HCT116 (cell line): ENCODE measurements at regions of chr6 and their contacts with region 1.

Region 1: GRCh38 chr6:31739639-31740396 is at the start of gene MSH5:
- DNase-seq: peak; percentile 99
- ATAC-seq: peak; percentile 86
- H3K4me3 ChIP-seq: peak within 1 kb of the TSS; percentile 86 to 92
- H3K27ac ChIP-seq: peak within 1 kb of the TSS; percentile 99
- H3K4me1 ChIP-seq: peaks cover 35 to 51% of the 10 kb centered on the region in 2 experiments
- H3K27me3 ChIP-seq: no peaks in the 10 kb centered on the region
- CTCF ChIP-seq: no peak
- POLR2A ChIP-seq: peak; percentile 39
- RAD21 ChIP-seq: no peak
- total RNA-seq, gene MSH5: 90.4 TPM

Region 2: GRCh38 chr6:31546962-31547726 is 192.7 kb before region 1 on chr6 and contains the start of gene NFKBIL1:
- CTCF ChIA-PET with region 1: no interaction called
- POLR2A ChIA-PET with region 1: no interaction called
- RAD21 ChIA-PET with region 1: no interaction called
- intact Hi-C with region 1: loop called (anchors 1 kb)
- DNase-seq: peak; percentile 97
- ATAC-seq: peak; percentile 78
- H3K4me3 ChIP-seq: peak within 1 kb of the TSS; percentile 51 to 67
- H3K27ac ChIP-seq: peak within 1 kb of the TSS; percentile 50
- H3K4me1 ChIP-seq: peaks cover 19 to 30% of the 10 kb centered on the region in 2 experiments
- H3K27me3 ChIP-seq: no peaks in the 10 kb centered on the region
- CTCF ChIP-seq: no peak
- POLR2A ChIP-seq: peak; percentile 37
- RAD21 ChIP-seq: no peak
- total RNA-seq, gene NFKBIL1: 26.6 TPM

Region 3: GRCh38 chr6:31680840-31681671 is 58.8 kb before region 1 on chr6 and contains the start of gene LY6G5C:
- CTCF ChIA-PET with region 1: interaction called, 9 read pairs
- POLR2A ChIA-PET with region 1: interaction called, 4 read pairs
- RAD21 ChIA-PET with region 1: interaction called, 3 read pairs
- intact Hi-C with region 1: loop called (anchors 1 kb)
- DNase-seq: peak; percentile 73
- ATAC-seq: peak; percentile 85
- H3K4me3 ChIP-seq: peak within 1 kb of the TSS; percentile 53 to 61
- H3K27ac ChIP-seq: peak within 1 kb of the TSS; percentile 70
- H3K4me1 ChIP-seq: peaks cover 4 to 19% of the 10 kb centered on the region in 2 experiments; a peak in 3 of 4 replicates
- H3K27me3 ChIP-seq: no peaks in the 10 kb centered on the region
- CTCF ChIP-seq: peak; percentile 43 to 90 (median 65)
- POLR2A ChIP-seq: no peak
- RAD21 ChIP-seq: peak; percentile 99
- total RNA-seq, gene LY6G5C: 1.7 TPM

Region 4: DNA sequence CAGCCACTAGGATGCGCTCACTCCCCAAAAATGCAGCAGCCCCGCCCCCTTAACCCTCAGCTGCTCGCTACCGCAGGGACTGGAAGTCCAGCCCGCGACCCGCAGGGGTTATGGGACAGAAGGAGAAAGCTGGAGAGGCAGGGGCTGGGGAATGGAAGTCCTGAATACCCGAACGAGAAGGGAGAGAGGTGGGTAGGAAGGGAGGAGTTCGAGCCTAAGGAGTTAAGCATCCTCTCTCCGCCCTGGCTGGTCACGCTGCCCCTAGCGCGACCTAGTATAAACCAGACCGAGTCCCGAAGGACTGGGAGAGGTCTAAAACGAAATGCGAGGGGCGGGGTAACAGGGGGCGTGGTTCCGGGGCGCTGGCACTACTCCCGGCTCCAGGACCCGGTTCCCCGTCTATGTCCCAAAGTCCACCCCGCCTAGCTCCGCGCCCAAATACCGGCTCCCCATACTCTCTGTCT is 10.3 kb before region 1 on chr6:
- CTCF ChIA-PET with region 1: interaction called, 12 read pairs
- POLR2A ChIA-PET with region 1: interaction called, 10 read pairs
- RAD21 ChIA-PET with region 1: no interaction called
- intact Hi-C with region 1: no loop called
- DNase-seq: peak; percentile 70
- ATAC-seq: peak; percentile 82
- H3K4me3 ChIP-seq: peak overlapping the region; percentile 70 to 72
- H3K27ac ChIP-seq: peak overlapping the region; percentile 90
- H3K4me1 ChIP-seq: peaks cover 12 to 35% of the 10 kb centered on the region in 2 experiments
- H3K27me3 ChIP-seq: no peaks in the 10 kb centered on the region
- CTCF ChIP-seq: peak in 2 of 3 experiments; percentile 50 to 64; a peak in 1 of 6 replicates
- POLR2A ChIP-seq: no peak
- RAD21 ChIP-seq: no peak

Region 5: DNA sequence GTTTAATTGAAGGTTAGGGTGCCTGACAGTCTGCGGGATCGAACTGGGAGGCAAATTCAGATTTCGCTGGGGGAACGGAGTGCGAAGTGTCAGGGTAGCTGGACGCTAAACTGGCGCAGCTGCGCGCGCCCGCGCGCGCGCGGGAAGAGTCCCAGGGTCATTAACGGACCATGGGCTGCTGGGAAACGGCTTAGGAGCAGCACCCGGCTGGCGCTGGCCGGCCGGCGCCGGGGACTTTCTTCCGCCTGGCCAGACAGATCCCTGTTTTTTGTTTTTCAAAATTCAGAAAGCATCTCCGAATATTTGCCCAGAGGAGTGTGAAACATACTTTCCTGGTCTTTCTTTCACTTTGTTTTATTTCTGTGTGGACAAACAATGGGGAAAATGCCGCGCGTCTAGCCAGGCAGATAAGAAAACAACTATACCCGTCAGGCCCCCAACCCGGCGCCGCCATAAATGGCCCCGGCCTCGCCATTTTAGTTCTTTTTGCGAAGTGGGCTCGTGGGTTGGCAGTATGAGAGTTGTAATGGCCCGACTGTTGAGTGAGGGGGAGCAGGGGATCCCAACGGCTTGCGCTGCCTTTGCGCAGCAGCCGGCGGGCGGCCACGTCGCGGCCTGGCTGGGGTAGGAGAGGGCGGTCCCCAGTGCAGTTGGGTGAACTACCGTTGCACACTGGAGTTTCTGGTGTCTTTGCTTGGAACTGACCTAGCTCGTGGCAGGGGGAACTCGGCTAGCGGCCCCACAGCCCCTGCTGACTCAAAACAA is 94.8 kb after region 1 on chr6:
- CTCF ChIA-PET with region 1: no interaction called
- POLR2A ChIA-PET with region 1: interaction called, 6 read pairs
- RAD21 ChIA-PET with region 1: no interaction called
- intact Hi-C with region 1: loop called (anchors 5 kb)
- DNase-seq: peak; percentile 77
- ATAC-seq: peak; percentile 83
- H3K4me3 ChIP-seq: peak overlapping the region; percentile 98 to 99
- H3K27ac ChIP-seq: peak overlapping the region; percentile 93
- H3K4me1 ChIP-seq: peaks cover 25 to 64% of the 10 kb centered on the region in 2 experiments
- H3K27me3 ChIP-seq: no peaks in the 10 kb centered on the region
- CTCF ChIP-seq: no peak
- POLR2A ChIP-seq: peak; percentile 97
- RAD21 ChIP-seq: no peak

Region 6: GRCh38 chr6:32195652-32195901 is 455.8 kb after region 1 on chr6:
- CTCF ChIA-PET with region 1: no interaction called
- POLR2A ChIA-PET with region 1: no interaction called
- RAD21 ChIA-PET with region 1: no interaction called
- intact Hi-C with region 1: no loop called
- DNase-seq: peak; percentile 99
- ATAC-seq: peak; percentile 88
- H3K4me3 ChIP-seq: peak overlapping the region; percentile 70 to 76
- H3K27ac ChIP-seq: peak overlapping the region; percentile 99
- H3K4me1 ChIP-seq: peaks cover 27 to 58% of the 10 kb centered on the region in 2 experiments
- H3K27me3 ChIP-seq: no peaks in the 10 kb centered on the region
- CTCF ChIP-seq: peak in 1 of 3 experiments; percentile 54; a peak in 2 of 6 replicates
- POLR2A ChIP-seq: peak; percentile 17
- RAD21 ChIP-seq: no peak